ENCODE measurements at regions of chr5 and their contacts with region 1.

Region 1: DNA sequence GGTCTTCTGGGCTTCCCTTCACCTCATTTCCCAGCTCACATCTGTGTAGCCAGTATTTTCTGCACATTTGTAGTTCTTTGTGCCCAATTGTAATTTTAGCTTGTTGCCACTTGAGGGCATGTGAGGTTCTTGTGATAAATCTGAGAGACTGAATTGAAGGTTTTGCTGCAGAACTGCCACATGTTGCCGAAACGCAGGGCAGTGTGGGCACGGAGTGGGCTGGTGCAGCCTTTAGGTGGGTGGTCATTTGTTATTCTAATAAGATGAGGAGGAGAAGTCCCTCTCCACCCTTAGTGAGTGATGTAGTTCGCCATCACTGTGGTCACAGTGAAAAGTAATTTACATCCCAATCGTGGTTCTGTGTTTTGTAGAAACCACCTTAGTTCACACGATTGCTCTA is 21.2 kb downstream of the OTULIN start:
- DNase-seq: peak in 31 of 42 donors; percentile 24 to 79 (median 59)

Region 2: DNA sequence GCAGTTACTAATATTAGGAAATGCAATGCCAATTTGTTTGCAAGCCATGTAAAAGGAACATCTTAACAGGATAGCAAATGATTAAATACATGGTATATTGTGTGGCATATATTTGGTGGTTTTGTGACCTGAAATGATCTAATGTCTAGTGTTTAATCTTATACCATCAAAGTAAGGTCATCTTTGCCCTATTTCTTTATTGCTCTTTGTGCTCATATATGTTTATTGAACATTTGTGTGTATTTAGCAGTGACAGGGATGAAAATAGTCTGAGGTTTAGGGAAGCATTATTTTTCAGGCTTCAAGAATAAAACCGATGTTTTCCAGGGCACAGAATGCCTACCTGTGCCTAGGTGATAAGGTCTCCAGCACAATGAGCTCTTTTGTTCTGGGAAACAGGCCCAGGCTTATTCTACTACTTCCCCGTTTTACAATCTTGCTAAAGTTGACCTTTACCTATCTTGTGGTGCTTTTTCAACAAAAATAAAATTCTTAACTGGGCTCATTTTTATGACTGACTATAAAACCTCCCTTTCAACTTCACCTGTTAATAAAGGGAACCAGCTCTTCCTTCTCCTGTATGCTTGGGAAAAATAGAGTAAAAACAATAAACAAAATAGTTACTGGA is 291.4 kb after region 1 on chr5:
- intact Hi-C with region 1: no loop called
- DNase-seq: no peak

Region 3: GRCh38 chr5:15013654-15014463 is 328.1 kb after region 1 on chr5:
- intact Hi-C with region 1: loop called (anchors 2 kb)
- DNase-seq: peak in 3 of 42 donors; percentile 20 to 44 (median 34)

Measured in head of caudate nucleus (tissue), 42 donors.